ENCODE measurements at regions of chr11 and their contacts with region 1.

Region 1: DNA sequence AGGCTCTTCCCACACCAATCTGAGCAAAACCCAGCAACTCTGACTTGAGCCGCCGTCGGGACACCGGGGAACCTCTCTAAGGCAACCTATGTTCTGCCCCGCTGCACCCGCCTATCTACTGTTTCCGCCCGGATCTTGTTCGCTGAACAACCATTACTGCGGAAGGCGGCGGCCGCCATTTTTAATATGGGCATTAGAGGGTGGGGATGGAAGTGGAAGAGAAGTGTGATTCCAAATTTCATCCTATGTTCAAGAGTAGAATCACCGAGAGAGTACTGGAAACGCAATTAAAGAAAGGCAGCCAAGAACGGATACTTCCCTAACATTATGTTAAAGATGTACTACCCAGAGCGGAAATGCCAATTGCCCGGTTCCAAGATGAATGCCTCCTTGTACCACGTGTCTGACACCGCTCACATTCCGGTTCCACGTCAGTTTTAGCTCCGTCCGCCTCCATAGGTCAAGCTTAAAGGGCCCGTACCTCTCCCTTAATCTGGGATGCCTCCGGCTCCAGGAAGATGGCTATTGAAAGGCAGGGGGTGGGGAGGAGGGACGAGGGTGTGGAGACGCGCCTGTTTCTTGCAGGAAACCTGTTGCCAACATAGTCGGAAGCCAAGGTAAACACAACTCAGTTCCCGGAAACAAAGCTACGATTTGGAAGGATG is at the start of gene DPAGT1:
- DNase-seq: peak; percentile 94
- ATAC-seq: peak; percentile 97
- total RNA-seq, gene DPAGT1: 21.1 TPM

Region 2: GRCh38 chr11:118928108-118928870 is 173.6 kb before region 1 on chr11:
- intact Hi-C with region 1: loop called (anchors 5 kb)
- DNase-seq: peak; percentile 86
- ATAC-seq: peak; percentile 77

Region 3: DNA sequence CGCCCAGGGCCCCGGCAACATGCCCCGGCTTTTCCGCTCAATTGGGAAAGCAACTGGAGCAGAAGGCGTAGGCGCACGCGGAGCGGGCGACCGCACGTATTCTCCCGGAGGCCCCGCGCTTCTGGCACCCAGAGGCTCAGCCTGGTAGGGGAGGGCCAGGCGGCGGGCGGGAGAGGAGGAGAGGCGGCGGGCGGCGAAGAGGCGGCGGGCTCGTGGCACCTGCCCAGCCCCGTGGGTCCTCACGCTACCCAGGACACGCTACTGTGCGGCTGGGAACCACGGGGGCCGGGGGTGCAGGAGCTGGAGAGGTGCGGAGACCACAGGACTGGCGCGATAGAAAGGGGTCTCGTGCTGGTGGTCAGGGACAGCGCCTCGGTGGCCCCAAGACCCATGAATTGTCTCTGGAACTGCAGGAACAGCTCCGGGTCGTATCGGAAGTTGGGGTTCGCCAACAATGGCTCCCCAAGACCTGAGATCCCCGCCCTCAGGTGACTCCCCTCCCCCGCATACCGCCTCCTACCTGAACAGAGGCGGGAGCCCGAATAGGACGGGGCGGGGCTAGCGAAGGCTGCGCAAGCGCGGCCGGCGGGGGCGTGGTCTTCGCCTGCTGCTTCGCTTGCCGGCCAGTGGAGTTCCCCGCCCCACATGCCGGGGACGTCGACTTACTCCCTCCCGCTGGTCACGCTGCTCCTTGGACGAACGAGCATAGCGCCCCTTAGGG is 71.4 kb before region 1 on chr11 and contains the start of gene SLC37A4:
- intact Hi-C with region 1: loop called (anchors 2 kb)
- DNase-seq: peak; percentile 99
- ATAC-seq: peak; percentile 98
- total RNA-seq, gene SLC37A4: 7.2 TPM

Region 4: GRCh38 chr11:119121008-119121810 is 19.3 kb after region 1 on chr11 and contains the start of gene HINFP:
- intact Hi-C with region 1: loop called (anchors 2 kb)
- DNase-seq: peak; percentile 100
- ATAC-seq: peak; percentile 100
- total RNA-seq, gene HINFP: 13.0 TPM

Region 5: DNA sequence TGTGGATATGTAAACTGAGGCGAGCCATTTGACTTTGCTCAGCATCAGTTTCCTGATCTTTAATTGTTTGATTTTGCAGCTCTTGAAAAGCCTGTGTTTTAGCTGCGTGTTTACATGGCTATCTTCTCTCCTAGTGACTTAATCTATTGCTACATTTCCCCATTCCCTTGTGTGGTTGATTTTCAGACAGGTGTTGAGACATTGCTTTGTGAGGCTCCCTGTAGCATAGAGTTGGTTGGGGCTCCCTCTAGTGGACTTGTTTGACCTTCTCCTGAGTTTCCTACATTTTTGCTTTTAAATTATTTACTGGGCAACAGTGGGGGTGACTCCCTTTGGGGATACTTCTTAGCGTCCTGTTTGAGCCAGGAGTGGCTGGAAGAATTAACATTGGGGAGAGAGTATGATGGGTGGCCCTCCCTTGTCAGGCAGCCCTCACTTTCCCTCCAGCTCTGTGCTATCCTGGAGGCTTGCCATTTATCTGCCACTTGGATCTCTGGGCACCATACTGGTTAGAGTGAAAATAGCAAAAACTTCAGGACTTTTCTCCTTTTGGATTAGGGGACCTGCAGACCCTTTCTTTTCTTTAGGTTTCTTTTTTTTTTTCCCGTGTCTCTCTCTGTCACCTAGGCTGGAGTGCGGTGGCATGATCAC is 95.1 kb after region 1 on chr11:
- intact Hi-C with region 1: loop called (anchors 5 kb)
- DNase-seq: no peak
- ATAC-seq: peak; percentile 87

Region 6: DNA sequence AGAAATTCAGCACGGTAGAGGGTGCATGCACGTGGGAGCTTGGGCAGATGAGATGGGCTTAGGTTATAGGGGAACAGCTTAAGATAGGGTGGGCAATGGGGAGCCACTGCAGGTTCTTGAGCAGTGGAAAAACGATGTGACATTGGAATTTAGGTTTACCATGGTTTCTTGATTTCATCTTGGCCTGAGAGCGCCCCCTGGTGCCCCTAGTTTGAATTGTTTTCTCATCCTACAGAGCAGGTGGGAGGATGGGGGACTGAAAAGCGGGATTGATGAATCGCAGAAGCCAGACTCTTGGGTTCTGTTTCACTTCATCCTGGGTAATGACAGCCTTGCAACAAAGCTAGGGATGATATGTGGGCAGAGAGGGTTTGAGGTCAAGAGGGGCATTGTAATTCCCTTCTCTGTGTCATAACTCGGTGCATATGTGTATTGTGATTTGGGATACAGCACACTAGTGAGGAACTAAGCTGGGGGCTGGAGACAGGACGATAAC is 221.7 kb after region 1 on chr11:
- intact Hi-C with region 1: loop called (anchors 5 kb)
- DNase-seq: peak; percentile 85
- ATAC-seq: no peak

Measured in Right ventricle myocardium inferior (tissue), 1 donor.